Sciatic nerve (tissue), 2 donors: ENCODE measurements at regions of chr20 and their contacts with region 1.

Region 1: GRCh38 chr20:31661625-31662371 is 24.1 kb downstream of the COX4I2 start:
- DNase-seq: peak; percentile 90
- ATAC-seq: peak; percentile 89

Region 2: GRCh38 chr20:31712564-31713311 is 50.9 kb after region 1 on chr20:
- intact Hi-C with region 1: no loop called
- DNase-seq: peak; percentile 77
- ATAC-seq: peak; percentile 95

Region 3: DNA sequence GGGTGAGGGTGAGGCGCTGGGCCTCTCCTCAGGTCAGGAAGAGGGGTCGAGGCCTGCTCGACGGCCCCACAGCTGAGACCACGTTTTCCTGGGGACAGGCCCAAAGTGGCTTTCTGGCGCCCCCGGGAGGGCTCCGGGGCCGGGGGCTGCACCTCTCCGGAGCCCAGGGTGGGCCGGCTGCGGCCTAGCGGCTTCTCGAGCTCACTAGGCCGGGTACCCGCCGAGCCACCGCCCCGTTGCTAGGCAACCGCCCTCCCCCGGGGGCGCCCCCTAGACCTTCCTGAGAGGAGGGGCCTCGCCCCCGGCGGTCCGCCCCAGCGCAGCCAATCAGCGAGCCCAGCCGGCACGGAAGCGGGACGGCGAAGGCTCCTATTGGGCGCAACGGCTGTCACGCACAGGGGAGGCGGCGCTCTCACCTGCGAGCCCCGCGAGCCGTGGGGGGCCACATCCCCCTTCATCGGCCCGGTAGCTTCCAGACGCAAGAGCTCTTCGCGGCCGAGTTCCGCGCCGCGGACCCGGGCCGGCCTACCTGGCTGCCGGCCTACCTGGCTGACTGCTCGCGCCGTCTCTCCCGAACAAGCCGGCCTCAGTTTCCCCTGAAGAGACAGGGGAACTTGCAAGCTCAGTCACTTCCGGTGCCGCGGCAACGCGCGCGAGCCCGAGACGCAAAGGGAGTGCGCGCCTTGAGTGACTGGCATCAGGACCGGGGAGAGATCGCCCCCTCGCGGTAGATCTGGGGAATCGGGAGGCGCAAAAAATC is 61.7 kb after region 1 on chr20:
- intact Hi-C with region 1: loop called (anchors 2 kb)
- DNase-seq: peak; percentile 99
- ATAC-seq: peak; percentile 96